Gastrocnemius medialis (tissue), 4 donors: ENCODE measurements at regions of chr11 and their contacts with region 1.

Region 1: GRCh38 chr11:11313426-11313825 is 39.6 kb downstream of the CSNK2A3 start:
- DNase-seq: peak; percentile 10 to 37
- ATAC-seq: peak; percentile 64 to 66
- H3K4me3 ChIP-seq: no peak overlapping the region
- H3K27ac ChIP-seq: peak overlapping the region; percentile 67 to 78 (median 73)
- H3K4me1 ChIP-seq: peaks cover 17 to 20% of the 10 kb centered on the region in 2 donors
- H3K27me3 ChIP-seq: no peaks in the 10 kb centered on the region
- CTCF ChIP-seq: no peak
- POLR2A ChIP-seq: no peak

Region 2: GRCh38 chr11:11510939-11511338 is 197.5 kb after region 1 on chr11:
- in situ Hi-C with region 1: no loop called
- intact Hi-C with region 1: loop called (anchors 5 kb)
- DNase-seq: peak; percentile 44 to 55
- ATAC-seq: peak; percentile 19 to 21
- H3K4me3 ChIP-seq: no peak overlapping the region
- H3K27ac ChIP-seq: peak overlapping the region; percentile 72 to 88 (median 82)
- H3K4me1 ChIP-seq: peaks cover 38 to 54% of the 10 kb centered on the region in 2 donors
- H3K27me3 ChIP-seq: no peaks in the 10 kb centered on the region
- CTCF ChIP-seq: no peak
- POLR2A ChIP-seq: no peak

Region 3: DNA sequence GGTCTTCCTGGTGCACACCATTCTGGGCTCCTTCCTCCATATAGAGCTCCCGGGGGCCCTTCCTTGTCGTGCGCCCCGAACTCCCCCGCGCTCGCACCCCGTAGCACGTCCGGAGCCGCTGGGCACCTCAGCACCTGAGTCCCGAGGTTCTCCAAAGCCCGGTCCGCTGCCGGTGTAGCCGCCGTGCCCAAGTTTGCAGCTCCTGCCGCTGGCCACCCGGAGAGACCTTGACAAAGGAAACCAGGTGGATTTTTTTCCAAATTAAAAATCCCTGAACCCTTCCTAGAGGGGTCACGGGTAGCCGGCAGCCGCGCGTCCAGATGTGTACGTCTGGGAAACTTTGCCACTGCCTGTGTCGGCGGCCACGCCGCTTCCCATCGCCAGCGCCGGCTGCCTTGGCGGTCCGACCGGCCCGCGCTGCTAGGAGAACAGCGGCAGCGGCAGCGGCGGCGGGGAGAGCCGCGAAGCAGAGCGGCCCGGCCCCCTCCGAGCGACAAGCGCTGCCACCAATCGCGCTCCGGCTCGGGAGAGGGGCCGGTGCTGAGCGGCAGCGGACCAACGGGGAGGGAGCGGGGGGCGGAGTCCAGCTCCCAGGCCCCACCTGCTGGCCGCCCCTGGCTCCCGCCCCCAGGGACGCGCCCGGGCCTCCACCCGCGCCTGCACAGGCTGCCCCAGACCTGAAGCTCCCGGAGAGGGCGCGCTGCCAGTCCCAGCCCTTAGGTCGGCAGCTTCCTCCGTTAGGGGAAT is 308.3 kb after region 1 on chr11 and contains the start of gene GALNT18:
- in situ Hi-C with region 1: no loop called
- intact Hi-C with region 1: loop called (anchors 5 kb)
- DNase-seq: peak; percentile 84 to 89
- ATAC-seq: peak; percentile 79 to 83
- H3K4me3 ChIP-seq: peak within 1 kb of the TSS; percentile 65 to 88 (median 76)
- H3K27ac ChIP-seq: peak within 1 kb of the TSS; percentile 69 to 88 (median 80)
- H3K4me1 ChIP-seq: peaks cover 17 to 25% of the 10 kb centered on the region in 2 donors
- H3K27me3 ChIP-seq: no peaks in the 10 kb centered on the region
- CTCF ChIP-seq: peak; percentile 32 to 73 (median 67)
- POLR2A ChIP-seq: peak; percentile 72 to 87
- total RNA-seq, gene GALNT18: 10.5 to 29.2 (median 11.2) TPM